Activated CD8-positive, alpha-beta T cell treated with anti-CD3 and anti-CD28 coated beads for 36 hours (primary cell): ENCODE measurements at regions of chr1 and their contacts with region 1.

Region 1: DNA sequence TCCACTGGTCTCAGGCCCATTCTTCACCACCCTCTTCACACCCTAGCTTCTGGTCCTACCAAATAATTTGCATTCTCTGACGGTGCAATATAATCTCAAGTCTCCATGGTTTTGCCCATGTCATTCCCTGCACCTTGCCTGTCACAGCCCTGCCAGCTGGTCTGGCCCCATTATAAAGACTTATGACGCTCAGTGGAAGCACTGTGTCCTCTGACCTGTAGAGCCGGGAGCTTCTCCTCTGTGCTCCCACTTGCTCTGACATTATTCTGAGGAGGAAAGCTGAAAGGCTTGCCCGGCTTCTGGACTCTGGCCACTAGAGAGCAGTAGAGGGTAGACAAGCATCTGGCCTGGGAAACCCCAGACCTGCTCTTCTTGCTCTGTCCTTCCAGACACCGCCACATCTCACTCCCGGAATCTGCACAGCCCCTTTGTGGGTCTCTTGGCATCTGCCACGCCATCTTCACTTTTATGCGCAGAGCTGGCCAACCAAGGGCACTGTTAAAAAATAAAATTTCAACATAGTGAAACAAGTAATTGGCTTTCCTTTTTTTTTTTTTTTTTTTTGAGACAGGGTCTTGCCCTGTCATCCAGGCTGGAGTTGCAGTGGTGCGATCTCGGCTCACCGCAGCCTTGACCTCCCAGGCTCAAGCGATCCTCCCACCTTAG is 44.4 kb downstream of the NENF start:
- DNase-seq: peak; percentile 87
- ATAC-seq: peak; percentile 93
- H3K4me3 Mint-ChIP-seq: no peak overlapping the region
- H3K27ac Mint-ChIP-seq: no peak overlapping the region
- H3K4me1 Mint-ChIP-seq: peaks cover 22% of the 10 kb centered on the region
- H3K27me3 Mint-ChIP-seq: peaks cover 7% of the 10 kb centered on the region
- CTCF ChIP-seq: peak; percentile 84

Region 2: GRCh38 chr1:212234431-212235395 is 242.4 kb before region 1 on chr1:
- CTCF ChIA-PET with region 1: no interaction called
- POLR2A ChIA-PET with region 1: no interaction called
- intact Hi-C with region 1: no loop called
- DNase-seq: peak; percentile 53
- ATAC-seq: peak; percentile 92
- H3K4me3 Mint-ChIP-seq: no peak overlapping the region
- H3K27ac Mint-ChIP-seq: peak overlapping the region; percentile 52
- H3K4me1 Mint-ChIP-seq: peaks cover 39% of the 10 kb centered on the region
- H3K27me3 Mint-ChIP-seq: no peaks in the 10 kb centered on the region
- CTCF ChIP-seq: no peak

Region 3: GRCh38 chr1:212514056-212514614 is 37.0 kb after region 1 on chr1:
- CTCF ChIA-PET with region 1: interaction called, 17 read pairs
- POLR2A ChIA-PET with region 1: no interaction called
- intact Hi-C with region 1: no loop called
- DNase-seq: peak; percentile 43
- ATAC-seq: peak; percentile 64
- H3K4me3 Mint-ChIP-seq: no peak overlapping the region
- H3K27ac Mint-ChIP-seq: no peak overlapping the region
- H3K4me1 Mint-ChIP-seq: peaks cover 2% of the 10 kb centered on the region
- H3K27me3 Mint-ChIP-seq: peaks cover 52% of the 10 kb centered on the region
- CTCF ChIP-seq: no peak

Region 4: GRCh38 chr1:212545941-212546635 is 68.9 kb after region 1 on chr1:
- CTCF ChIA-PET with region 1: no interaction called
- POLR2A ChIA-PET with region 1: no interaction called
- intact Hi-C with region 1: no loop called
- DNase-seq: no peak
- ATAC-seq: no peak
- H3K4me3 Mint-ChIP-seq: no peak overlapping the region
- H3K27ac Mint-ChIP-seq: no peak overlapping the region
- H3K4me1 Mint-ChIP-seq: no peaks in the 10 kb centered on the region
- H3K27me3 Mint-ChIP-seq: peaks cover 13% of the 10 kb centered on the region
- CTCF ChIP-seq: no peak

Region 5: GRCh38 chr1:212595787-212596714 is 118.9 kb after region 1 on chr1:
- CTCF ChIA-PET with region 1: interaction called, 14 read pairs
- POLR2A ChIA-PET with region 1: interaction called, 3 read pairs
- intact Hi-C with region 1: no loop called
- DNase-seq: peak; percentile 70
- ATAC-seq: peak; percentile 92
- H3K4me3 Mint-ChIP-seq: peak overlapping the region; percentile 62
- H3K27ac Mint-ChIP-seq: peak overlapping the region; percentile 94
- H3K4me1 Mint-ChIP-seq: peaks cover 30% of the 10 kb centered on the region
- H3K27me3 Mint-ChIP-seq: peaks cover 6% of the 10 kb centered on the region
- CTCF ChIP-seq: peak; percentile 66

Region 6: DNA sequence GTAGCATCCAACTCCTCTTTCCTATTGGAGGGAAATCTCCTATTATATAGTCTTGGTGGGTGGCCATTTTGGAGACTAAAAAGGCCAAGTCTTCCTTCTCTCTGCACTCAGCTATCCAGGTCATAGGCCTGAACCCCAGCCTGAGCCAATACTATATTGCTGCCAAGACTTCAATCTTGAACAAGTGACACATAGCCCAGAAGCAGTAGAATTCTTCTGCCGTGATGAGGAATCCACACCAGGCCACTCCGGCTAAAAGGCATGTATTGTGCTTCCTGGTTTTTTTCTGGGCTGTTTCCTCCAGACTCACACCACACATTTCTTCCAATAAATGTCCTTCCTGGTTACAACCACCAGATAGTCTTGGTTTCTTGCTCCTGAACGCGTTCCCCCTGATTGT is 174.4 kb after region 1 on chr1:
- CTCF ChIA-PET with region 1: interaction called, 27 read pairs
- POLR2A ChIA-PET with region 1: no interaction called
- intact Hi-C with region 1: no loop called
- DNase-seq: no peak
- ATAC-seq: no peak
- H3K4me3 Mint-ChIP-seq: no peak overlapping the region
- H3K27ac Mint-ChIP-seq: no peak overlapping the region
- H3K4me1 Mint-ChIP-seq: no peaks in the 10 kb centered on the region
- H3K27me3 Mint-ChIP-seq: peaks cover 6% of the 10 kb centered on the region
- CTCF ChIP-seq: no peak

Region 7: GRCh38 chr1:212760126-212760823 is 283.1 kb after region 1 on chr1:
- CTCF ChIA-PET with region 1: interaction called, 4 read pairs
- POLR2A ChIA-PET with region 1: no interaction called
- intact Hi-C with region 1: loop called (anchors 10 kb)
- DNase-seq: peak; percentile 76
- ATAC-seq: peak; percentile 96
- H3K4me3 Mint-ChIP-seq: no peak overlapping the region
- H3K27ac Mint-ChIP-seq: no peak overlapping the region
- H3K4me1 Mint-ChIP-seq: peaks cover 17% of the 10 kb centered on the region
- H3K27me3 Mint-ChIP-seq: no peaks in the 10 kb centered on the region
- CTCF ChIP-seq: peak; percentile 62